Gastrocnemius medialis (tissue), 4 donors: ENCODE measurements at regions of chr2 and their contacts with region 1.

Region 1: DNA sequence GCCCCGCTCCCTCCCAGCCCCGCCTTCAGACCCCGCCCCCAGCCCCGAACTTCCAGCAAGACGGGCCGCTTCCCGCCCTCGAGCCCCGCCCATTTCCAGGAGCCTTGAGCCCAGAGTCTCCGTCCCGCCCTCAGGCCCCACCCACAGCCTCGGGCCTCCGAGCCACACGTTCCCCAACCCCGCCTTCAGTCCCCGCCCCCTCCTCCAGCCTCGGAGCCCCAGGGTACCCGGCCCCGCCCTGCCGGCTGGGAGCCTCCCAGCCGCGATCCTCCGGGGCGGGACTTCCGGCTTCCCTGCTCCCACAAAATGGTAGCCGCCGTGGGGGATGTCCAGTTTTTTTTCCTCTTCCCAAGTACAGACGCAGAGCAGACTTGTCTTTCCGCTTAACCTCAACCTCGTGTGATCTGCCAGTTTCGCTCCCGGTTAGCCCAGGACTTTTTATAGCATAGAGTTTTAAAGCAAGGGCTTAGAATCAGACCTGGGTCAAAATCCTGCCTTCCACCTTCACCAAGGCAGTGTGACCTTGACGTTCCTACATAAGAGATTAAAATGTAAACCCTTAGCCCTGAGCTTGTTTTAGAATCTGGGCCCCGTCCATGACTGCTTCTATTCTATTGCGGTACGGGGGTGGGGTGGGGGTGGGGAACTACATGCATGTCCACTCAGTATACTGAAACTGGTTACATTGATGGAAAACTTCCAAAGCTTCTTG is 435 bp upstream of the GPR155 start:
- DNase-seq: peak; percentile 99
- ATAC-seq: peak; percentile 89 to 92
- H3K4me3 ChIP-seq: peak overlapping the region; percentile 76 to 100 (median 91)
- H3K27ac ChIP-seq: peak overlapping the region; percentile 79 to 94 (median 87)
- H3K4me1 ChIP-seq: peaks cover 8 to 14% of the 10 kb centered on the region in 2 donors
- H3K27me3 ChIP-seq: no peaks in the 10 kb centered on the region
- CTCF ChIP-seq: no peak
- POLR2A ChIP-seq: peak in 1 of 2 donors; percentile 44

Region 2: DNA sequence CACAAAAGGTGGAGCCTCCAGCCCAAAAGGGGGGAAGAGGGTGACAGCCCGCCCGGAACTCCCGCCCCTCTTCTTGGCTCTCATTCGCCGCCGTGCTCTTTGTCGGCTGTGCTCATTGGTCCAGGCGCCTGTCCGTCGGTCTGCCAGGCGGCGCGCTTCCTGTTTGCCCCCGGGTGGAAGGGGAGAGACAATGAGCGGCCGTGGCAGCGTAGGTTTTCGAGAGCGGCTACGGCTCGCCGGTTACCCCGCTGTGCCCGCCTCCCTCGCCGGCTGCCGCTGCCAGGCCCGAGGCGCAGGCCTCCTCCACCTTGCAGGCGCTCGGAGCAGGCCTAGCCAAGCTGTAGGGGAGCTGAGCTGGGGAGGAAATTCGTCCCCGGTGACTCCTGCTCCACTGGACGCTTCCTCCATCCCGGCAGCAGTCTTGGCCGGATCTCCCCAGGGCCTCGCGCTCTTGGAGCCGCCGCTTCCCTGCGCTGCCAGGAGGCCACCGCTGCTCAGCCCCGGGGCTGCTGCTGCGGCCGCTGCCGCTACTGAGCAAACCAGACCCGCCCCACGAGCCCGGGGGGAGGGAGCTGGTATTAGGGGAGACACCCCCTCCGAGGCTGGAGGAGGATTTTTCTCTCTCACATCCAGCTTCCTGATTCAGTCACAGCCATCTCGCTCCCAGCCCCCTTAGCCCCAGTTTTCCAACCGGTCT is 521.8 kb before region 1 on chr2 and contains the start of gene SP3:
- in situ Hi-C with region 1: no loop called
- intact Hi-C with region 1: loop called (anchors 5 kb)
- DNase-seq: peak; percentile 97
- ATAC-seq: peak; percentile 78 to 80
- H3K4me3 ChIP-seq: peak within 1 kb of the TSS; percentile 92 to 98 (median 94)
- H3K27ac ChIP-seq: peak within 1 kb of the TSS; percentile 98 to 100 (median 98)
- H3K4me1 ChIP-seq: peaks cover 32 to 35% of the 10 kb centered on the region in 2 donors
- H3K27me3 ChIP-seq: no peaks in the 10 kb centered on the region
- CTCF ChIP-seq: peak in 3 of 5 experiments; percentile 7 to 18 (median 16)
- POLR2A ChIP-seq: peak; percentile 91 to 95
- total RNA-seq, gene SP3: 47.9 to 68.9 (median 58.7) TPM

Region 3: DNA sequence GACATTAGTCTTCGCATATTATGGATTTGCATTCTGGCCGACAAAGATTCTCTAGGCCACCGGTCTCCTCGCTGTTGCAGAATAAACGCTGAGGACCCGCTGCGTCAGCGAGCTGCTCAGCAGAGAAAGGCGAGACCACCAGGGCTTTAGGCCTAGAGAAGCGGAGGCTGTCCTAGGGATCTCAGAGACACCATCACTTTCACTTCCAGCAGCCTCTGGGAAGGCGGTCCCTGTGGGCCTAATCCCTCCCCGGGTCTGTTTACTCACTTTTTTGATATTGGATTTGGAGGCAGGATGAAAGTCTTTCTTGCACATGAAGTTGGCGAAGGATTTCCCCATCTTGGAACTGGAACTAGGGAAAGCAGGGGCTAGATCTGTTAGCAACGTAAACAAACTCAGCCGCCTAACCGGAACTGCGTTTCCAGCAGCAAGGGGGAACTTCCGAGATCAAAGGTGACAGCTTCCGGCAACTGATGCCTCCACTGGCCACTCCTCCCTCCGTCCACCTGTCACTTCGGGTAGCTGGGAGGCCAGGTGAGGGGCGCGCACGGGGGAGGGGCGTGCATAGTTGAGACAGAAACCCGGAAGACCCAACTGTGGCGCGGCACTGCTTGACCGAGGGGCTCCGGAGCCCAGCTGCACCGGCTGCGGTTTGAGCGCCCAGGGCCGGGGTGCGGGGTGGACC is 91.8 kb before region 1 on chr2 and contains the start of gene SCRN3:
- in situ Hi-C with region 1: no loop called
- intact Hi-C with region 1: loop called (anchors 1 kb)
- DNase-seq: peak; percentile 72 to 74
- ATAC-seq: peak; percentile 97 to 98
- H3K4me3 ChIP-seq: peak within 1 kb of the TSS; percentile 86 to 89 (median 88)
- H3K27ac ChIP-seq: peak within 1 kb of the TSS; percentile 80 to 91 (median 87)
- H3K4me1 ChIP-seq: peaks cover 17 to 36% of the 10 kb centered on the region in 2 donors
- H3K27me3 ChIP-seq: no peaks in the 10 kb centered on the region
- CTCF ChIP-seq: no peak
- POLR2A ChIP-seq: peak; percentile 29 to 33
- total RNA-seq, gene SCRN3: 13.9 to 24.2 (median 20.7) TPM

Region 4: GRCh38 chr2:175167792-175168563 is 680.7 kb after region 1 on chr2 and contains the start of gene ATF2:
- in situ Hi-C with region 1: loop called in 2 of 4 experiments (anchors 25 kb)
- intact Hi-C with region 1: loop called (anchors 2 kb)
- DNase-seq: peak; percentile 99
- ATAC-seq: peak; percentile 95 to 97
- H3K4me3 ChIP-seq: peak within 1 kb of the TSS; percentile 82 to 95 (median 94)
- H3K27ac ChIP-seq: peak within 1 kb of the TSS; percentile 94 to 98 (median 96)
- H3K4me1 ChIP-seq: peaks cover 14 to 15% of the 10 kb centered on the region in 2 donors
- H3K27me3 ChIP-seq: no peaks in the 10 kb centered on the region
- CTCF ChIP-seq: no peak
- POLR2A ChIP-seq: peak; percentile 59 to 83
- total RNA-seq, gene ATF2: 19.5 to 28.1 (median 20.9) TPM